T-cell (primary cell): ENCODE measurements at regions of chr1 and their contacts with region 1.

Region 1: GRCh38 chr1:181310560-181310959 is 172.8 kb upstream of the CACNA1E start:
- DNase-seq: no peak
- ATAC-seq: no peak
- H3K4me3 ChIP-seq: no peak overlapping the region
- H3K4me3 Mint-ChIP-seq: no peak overlapping the region
- H3K27ac ChIP-seq: no peak overlapping the region
- H3K27ac Mint-ChIP-seq: no peak overlapping the region
- H3K4me1 ChIP-seq: no peaks in the 10 kb centered on the region
- H3K4me1 Mint-ChIP-seq: peaks cover 6 to 12% (median 9%) of the 10 kb centered on the region in 3 donors
- H3K27me3 ChIP-seq: peaks cover 0 to 21% of the 10 kb centered on the region in 2 experiments
- H3K27me3 Mint-ChIP-seq: peaks cover 31 to 33% of the 10 kb centered on the region in 2 donors

Region 2: GRCh38 chr1:181219938-181220337 is 90.6 kb before region 1 on chr1:
- CTCF ChIA-PET with region 1: no interaction called
- POLR2A ChIA-PET with region 1: no interaction called
- DNase-seq: no peak
- ATAC-seq: no peak
- H3K4me3 ChIP-seq: no peak overlapping the region
- H3K4me3 Mint-ChIP-seq: no peak overlapping the region
- H3K27ac ChIP-seq: no peak overlapping the region
- H3K27ac Mint-ChIP-seq: no peak overlapping the region
- H3K4me1 ChIP-seq: no peaks in the 10 kb centered on the region
- H3K4me1 Mint-ChIP-seq: no peaks in the 10 kb centered on the region
- H3K27me3 ChIP-seq: peaks cover 0 to 30% of the 10 kb centered on the region in 2 experiments
- H3K27me3 Mint-ChIP-seq: peaks cover 9 to 11% of the 10 kb centered on the region in 2 donors

Region 3: GRCh38 chr1:181459067-181459466 is 148.5 kb after region 1 on chr1:
- CTCF ChIA-PET with region 1: no interaction called
- POLR2A ChIA-PET with region 1: interaction called in 1 of 2 experiments, 11 read pairs
- DNase-seq: no peak
- ATAC-seq: no peak
- H3K4me3 ChIP-seq: no peak overlapping the region
- H3K4me3 Mint-ChIP-seq: no peak overlapping the region
- H3K27ac ChIP-seq: no peak overlapping the region
- H3K27ac Mint-ChIP-seq: no peak overlapping the region
- H3K4me1 ChIP-seq: no peaks in the 10 kb centered on the region
- H3K4me1 Mint-ChIP-seq: no peaks in the 10 kb centered on the region
- H3K27me3 ChIP-seq: peaks cover 0 to 25% of the 10 kb centered on the region in 2 experiments
- H3K27me3 Mint-ChIP-seq: peaks cover 11 to 37% of the 10 kb centered on the region in 2 donors

Region 4: DNA sequence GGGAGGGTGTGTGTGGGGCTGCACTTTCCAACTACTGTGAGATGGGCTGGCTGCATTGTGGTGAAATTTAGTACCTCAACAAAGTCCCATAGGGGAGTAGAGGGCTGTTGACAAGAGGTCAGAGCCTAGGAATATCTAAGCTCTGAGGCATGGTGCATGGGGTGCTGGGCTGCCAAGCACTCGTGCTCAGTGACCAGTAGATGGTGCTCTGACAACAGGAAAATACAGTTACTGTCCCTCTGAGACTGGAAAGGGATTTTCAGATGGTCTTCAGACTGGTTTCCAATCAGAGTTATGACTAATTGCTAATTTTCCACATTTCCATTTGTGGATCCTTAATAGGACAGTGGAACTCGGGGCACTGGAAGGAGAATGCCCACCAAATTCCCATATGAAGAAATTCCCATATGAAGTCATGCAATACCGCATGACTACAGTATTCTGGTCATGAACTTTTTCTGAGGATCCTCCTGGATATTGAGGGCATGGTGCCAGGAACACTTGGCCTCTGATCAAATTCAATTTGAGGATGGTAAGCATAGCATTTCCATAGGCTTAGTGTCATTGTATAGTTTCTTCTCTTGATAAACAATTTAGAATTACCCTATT is 168.7 kb after region 1 on chr1:
- CTCF ChIA-PET with region 1: no interaction called
- POLR2A ChIA-PET with region 1: no interaction called
- DNase-seq: peak in 9 of 35 experiments; percentile 5 to 60 (median 9)
- ATAC-seq: peak in 2 of 4 experiments; percentile 56 to 57
- H3K4me3 ChIP-seq: no peak overlapping the region
- H3K4me3 Mint-ChIP-seq: no peak overlapping the region
- H3K27ac ChIP-seq: no peak overlapping the region
- H3K27ac Mint-ChIP-seq: no peak overlapping the region
- H3K4me1 ChIP-seq: no peaks in the 10 kb centered on the region
- H3K4me1 Mint-ChIP-seq: peaks cover 8 to 13% (median 11%) of the 10 kb centered on the region in 3 donors
- H3K27me3 ChIP-seq: peaks cover 10 to 35% of the 10 kb centered on the region in 2 experiments
- H3K27me3 Mint-ChIP-seq: peaks cover 36 to 40% of the 10 kb centered on the region in 2 donors